WTC11 (cell line): ENCODE measurements at regions of chr5 and their contacts with region 1.

Region 1: GRCh38 chr5:81435023-81435422 is 41.1 kb upstream of the ACOT12 start:
- DNase-seq: no peak
- ATAC-seq: no peak
- H3K4me3 Mint-ChIP-seq: no peak overlapping the region
- H3K27ac Mint-ChIP-seq: no peak overlapping the region
- H3K4me1 Mint-ChIP-seq: no peaks in the 10 kb centered on the region
- H3K27me3 Mint-ChIP-seq: no peaks in the 10 kb centered on the region
- CTCF ChIP-seq: no peak

Region 2: GRCh38 chr5:81486711-81487110 is 51.7 kb after region 1 on chr5:
- CTCF ChIA-PET with region 1: no interaction called
- POLR2A ChIA-PET with region 1: interaction called, 12 read pairs
- DNase-seq: no peak
- ATAC-seq: no peak
- H3K4me3 Mint-ChIP-seq: no peak overlapping the region
- H3K27ac Mint-ChIP-seq: no peak overlapping the region
- H3K4me1 Mint-ChIP-seq: no peaks in the 10 kb centered on the region
- H3K27me3 Mint-ChIP-seq: no peaks in the 10 kb centered on the region
- CTCF ChIP-seq: no peak